Heart left ventricle (tissue), 16 donors: ENCODE measurements at regions of chr1 and their contacts with region 1.

Region 1: DNA sequence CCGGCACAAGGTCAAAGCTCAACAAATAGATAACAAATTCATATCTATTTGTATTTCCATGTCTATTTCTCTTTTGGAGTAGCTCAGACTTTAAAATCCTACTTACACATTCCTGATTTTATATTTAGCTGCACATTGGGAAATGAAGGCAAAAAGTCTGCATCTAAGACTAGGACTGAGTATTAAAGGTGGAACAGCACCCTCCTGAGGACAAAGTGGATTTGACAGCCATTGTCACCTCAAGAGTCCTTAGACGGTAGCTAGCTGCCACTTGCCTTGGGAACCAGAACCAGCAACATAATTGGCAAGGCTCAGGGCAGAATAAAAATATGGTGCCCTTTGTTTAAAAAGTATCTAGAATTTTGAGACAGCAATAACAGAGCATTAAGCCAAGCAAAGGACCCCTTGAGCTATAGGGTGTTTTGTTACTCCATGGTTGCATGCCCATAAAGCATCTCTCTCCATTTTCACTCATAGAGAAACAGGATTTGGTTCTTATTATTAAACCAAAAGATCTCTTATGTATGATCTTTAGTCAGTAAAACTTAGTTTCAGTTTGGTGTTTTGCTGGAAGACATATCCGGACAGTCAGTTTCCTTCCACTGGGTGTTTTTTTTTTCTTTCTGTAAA is 30.0 kb upstream of the SGIP1 start:
- DNase-seq: peak in 3 of 5 donors; percentile 39 to 48 (median 39)
- ATAC-seq: peak; percentile 81 to 89 (median 86)
- H3K4me3 ChIP-seq: no peak overlapping the region
- H3K27ac ChIP-seq: no peak overlapping the region
- H3K4me1 ChIP-seq: peaks cover 0 to 14% (median 0%) of the 10 kb centered on the region in 12 donors
- H3K27me3 ChIP-seq: no peaks in the 10 kb centered on the region
- CTCF ChIP-seq: peak; percentile 47 to 78 (median 67)
- POLR2A ChIP-seq: no peak

Region 2: GRCh38 chr1:65958561-65959350 is 545.2 kb before region 1 on chr1:
- intact Hi-C with region 1: loop called in 2 of 10 experiments (anchors 5 to 10 kb)
- DNase-seq: no peak
- ATAC-seq: peak in 2 of 4 donors; percentile 27 to 54
- H3K4me3 ChIP-seq: no peak overlapping the region
- H3K27ac ChIP-seq: no peak overlapping the region
- H3K4me1 ChIP-seq: no peaks in the 10 kb centered on the region
- H3K27me3 ChIP-seq: no peaks in the 10 kb centered on the region
- CTCF ChIP-seq: peak; percentile 56 to 90 (median 76)
- POLR2A ChIP-seq: no peak

Region 3: DNA sequence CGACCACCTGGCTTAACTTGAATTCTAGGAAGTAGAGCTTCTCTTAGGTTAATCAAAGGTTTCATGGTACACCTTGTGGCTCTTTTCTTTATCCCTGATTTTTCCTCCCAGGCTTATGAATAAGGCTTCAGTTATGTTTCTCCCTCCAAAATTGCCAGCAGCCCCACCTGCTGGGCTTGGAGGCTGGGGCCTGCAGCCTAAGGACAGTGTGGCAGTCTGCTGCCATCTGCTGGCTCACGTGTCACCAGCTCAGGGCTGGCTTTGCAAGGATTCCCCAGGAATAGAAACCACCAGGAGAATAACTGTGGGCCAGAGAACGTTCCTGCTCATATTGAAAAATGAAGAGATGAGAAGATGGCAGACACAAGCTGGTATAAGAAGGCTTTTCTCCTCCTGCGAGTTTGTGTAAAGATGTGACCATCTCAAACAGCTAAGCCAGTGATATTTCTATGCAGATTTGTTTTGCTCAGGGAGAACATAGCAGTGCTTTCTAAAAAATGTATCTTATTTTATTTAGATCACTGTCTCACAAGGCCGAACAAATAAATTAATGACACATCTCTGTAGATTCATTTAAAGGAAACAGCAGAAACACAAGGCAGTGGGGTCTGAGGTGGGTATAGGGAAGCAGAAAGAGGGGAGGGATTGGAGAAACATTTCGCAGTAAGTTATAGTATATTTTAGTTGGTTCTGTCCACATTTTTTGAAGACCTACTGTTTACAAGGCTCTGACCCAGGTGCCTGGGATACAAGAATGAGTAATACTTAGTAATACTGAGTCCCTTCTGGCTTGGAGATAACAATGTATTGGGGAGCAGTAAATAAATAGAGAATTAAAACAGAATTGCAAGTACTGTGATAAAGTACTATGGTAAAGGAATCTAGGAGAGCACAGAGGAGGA is 261.1 kb before region 1 on chr1:
- intact Hi-C with region 1: no loop called
- DNase-seq: peak; percentile 80 to 90 (median 87)
- ATAC-seq: peak; percentile 90 to 99 (median 98)
- H3K4me3 ChIP-seq: no peak overlapping the region
- H3K27ac ChIP-seq: no peak overlapping the region
- H3K4me1 ChIP-seq: peaks cover 0 to 4% (median 0%) of the 10 kb centered on the region in 12 donors
- H3K27me3 ChIP-seq: peaks cover 0 to 4% (median 0%) of the 10 kb centered on the region in 9 donors
- CTCF ChIP-seq: peak; percentile 91 to 100 (median 98)
- POLR2A ChIP-seq: no peak

Region 4: DNA sequence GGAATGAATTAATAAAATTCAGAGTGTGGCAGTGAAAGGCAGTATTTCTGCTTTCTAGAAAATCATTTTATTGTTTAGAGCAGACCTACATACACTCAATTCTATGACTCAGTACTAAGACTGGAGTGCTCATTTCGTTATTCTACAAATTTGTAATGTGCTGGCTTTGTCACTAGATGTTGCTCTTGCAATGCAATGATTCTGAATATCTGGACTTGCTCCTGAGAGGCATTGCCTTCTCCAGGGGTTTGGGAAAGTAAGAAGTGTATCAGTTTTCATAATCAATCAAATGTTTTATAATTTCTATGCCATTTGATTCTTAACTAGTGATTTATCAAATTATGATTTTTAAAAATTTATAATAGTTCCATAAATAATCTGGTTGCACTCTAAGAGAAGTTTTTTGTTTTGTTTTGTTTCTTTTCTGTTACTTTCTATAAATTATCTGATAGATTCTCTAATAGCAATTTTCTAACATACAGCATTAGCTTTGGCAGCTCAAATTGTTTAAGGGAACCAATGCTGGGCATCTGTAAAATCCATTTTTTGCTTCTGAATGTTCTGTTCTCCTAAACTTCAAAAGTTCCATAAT is 250.5 kb before region 1 on chr1:
- intact Hi-C with region 1: loop called in 9 of 10 experiments (anchors 2 to 5 kb)
- DNase-seq: peak in 1 of 5 donors; percentile 23
- ATAC-seq: peak; percentile 88 to 94 (median 92)
- H3K4me3 ChIP-seq: no peak overlapping the region
- H3K27ac ChIP-seq: no peak overlapping the region
- H3K4me1 ChIP-seq: peaks cover 0 to 25% (median 0%) of the 10 kb centered on the region in 12 donors
- H3K27me3 ChIP-seq: no peaks in the 10 kb centered on the region
- CTCF ChIP-seq: peak; percentile 72 to 93 (median 87)
- POLR2A ChIP-seq: no peak

Region 5: GRCh38 chr1:66258404-66259105 is 245.4 kb before region 1 on chr1:
- intact Hi-C with region 1: loop called in 8 of 10 experiments (anchors 2 to 5 kb)
- DNase-seq: no peak
- ATAC-seq: no peak
- H3K4me3 ChIP-seq: no peak overlapping the region
- H3K27ac ChIP-seq: no peak overlapping the region
- H3K4me1 ChIP-seq: peaks cover 0 to 23% (median 3%) of the 10 kb centered on the region in 12 donors
- H3K27me3 ChIP-seq: no peaks in the 10 kb centered on the region
- CTCF ChIP-seq: no peak
- POLR2A ChIP-seq: no peak

Region 6: GRCh38 chr1:66446261-66447001 is 57.5 kb before region 1 on chr1:
- intact Hi-C with region 1: loop called in 8 of 10 experiments (anchors 2 to 10 kb)
- DNase-seq: peak in 2 of 5 donors; percentile 22 to 39
- ATAC-seq: peak in 3 of 4 donors; percentile 41 to 59 (median 57)
- H3K4me3 ChIP-seq: no peak overlapping the region
- H3K27ac ChIP-seq: peak overlapping the region in 5 of 12 donors; percentile 21 to 78 (median 64)
- H3K4me1 ChIP-seq: peaks cover 0 to 40% (median 19%) of the 10 kb centered on the region in 12 donors
- H3K27me3 ChIP-seq: no peaks in the 10 kb centered on the region
- CTCF ChIP-seq: peak; percentile 74 to 94 (median 88)
- POLR2A ChIP-seq: no peak

Region 7: DNA sequence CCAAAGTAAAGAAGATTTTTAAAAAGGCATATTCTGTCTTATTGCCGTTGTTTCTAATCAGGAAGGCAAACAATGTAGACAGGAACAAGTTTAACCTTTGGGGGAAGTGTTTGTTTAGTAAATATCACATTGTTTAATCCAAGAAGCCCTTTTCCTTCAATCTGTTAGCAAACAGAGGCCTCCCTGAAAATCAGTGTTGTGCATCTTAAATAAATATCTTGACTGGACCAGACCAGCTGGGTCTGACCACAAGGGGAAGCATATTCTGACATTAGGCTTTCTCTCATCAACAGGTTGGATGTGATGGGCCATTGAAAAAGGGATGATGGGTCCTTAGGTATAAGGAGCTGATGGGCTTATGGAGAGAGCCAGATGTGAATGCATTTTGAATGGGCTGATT is 51.8 kb before region 1 on chr1:
- intact Hi-C with region 1: loop called in 8 of 10 experiments (anchors 2 to 10 kb)
- DNase-seq: no peak
- ATAC-seq: no peak
- H3K4me3 ChIP-seq: no peak overlapping the region
- H3K27ac ChIP-seq: no peak overlapping the region
- H3K4me1 ChIP-seq: peaks cover 0 to 24% (median 10%) of the 10 kb centered on the region in 12 donors
- H3K27me3 ChIP-seq: no peaks in the 10 kb centered on the region
- CTCF ChIP-seq: peak in 1 of 12 donors; percentile 14
- POLR2A ChIP-seq: no peak